Gastrocnemius medialis (tissue), 4 donors: ENCODE measurements at regions of chr1 and their contacts with region 1.

Region 1: DNA sequence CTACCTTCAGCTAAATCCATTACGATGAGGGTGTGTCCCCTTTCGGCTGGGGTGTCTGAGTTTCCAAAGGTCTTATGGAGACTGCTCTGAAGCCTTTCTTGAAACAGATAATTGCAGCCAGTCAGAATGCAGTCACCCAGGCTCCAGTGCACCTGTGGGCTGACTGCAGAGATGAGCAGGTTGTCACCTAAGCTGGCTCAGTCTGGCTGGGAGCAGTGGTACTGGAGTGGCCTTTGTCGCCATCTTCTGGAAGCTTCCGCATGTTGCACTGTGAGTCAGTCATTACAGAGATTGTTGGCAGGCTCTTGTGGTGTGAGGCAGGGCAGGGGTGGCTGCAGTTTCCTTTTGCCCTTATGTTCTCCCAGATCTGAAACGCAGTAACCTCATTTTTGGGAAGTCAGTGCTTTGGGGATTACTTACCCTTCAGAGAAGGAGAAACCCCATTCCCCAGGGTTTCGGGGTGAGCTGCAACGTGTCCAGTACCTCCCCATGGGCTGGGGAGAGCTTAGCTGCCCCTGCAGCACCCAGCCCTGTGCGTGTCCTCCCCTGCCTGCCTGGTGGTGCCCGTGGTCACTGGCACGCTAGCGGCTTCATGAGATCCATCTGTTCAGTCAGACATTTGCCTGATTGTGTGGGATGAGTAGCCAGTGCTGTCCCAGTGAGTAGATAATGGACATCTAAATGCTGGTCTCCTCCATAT is 48.0 kb downstream of the SMYD2 start:
- DNase-seq: peak; percentile 73 to 82
- ATAC-seq: peak; percentile 93 to 95
- H3K4me3 ChIP-seq: no peak overlapping the region
- H3K27ac ChIP-seq: no peak overlapping the region
- H3K4me1 ChIP-seq: peaks cover 6 to 15% of the 10 kb centered on the region in 2 donors
- H3K27me3 ChIP-seq: no peaks in the 10 kb centered on the region
- CTCF ChIP-seq: peak; percentile 92 to 98 (median 96)
- POLR2A ChIP-seq: no peak

Region 2: GRCh38 chr1:214213136-214213535 is 115.8 kb before region 1 on chr1:
- in situ Hi-C with region 1: loop called (anchors 5 kb)
- intact Hi-C with region 1: loop called (anchors 1 kb)
- DNase-seq: no peak
- ATAC-seq: no peak
- H3K4me3 ChIP-seq: no peak overlapping the region
- H3K27ac ChIP-seq: no peak overlapping the region
- H3K4me1 ChIP-seq: peaks cover 8 to 13% of the 10 kb centered on the region in 2 donors
- H3K27me3 ChIP-seq: no peaks in the 10 kb centered on the region
- CTCF ChIP-seq: no peak
- POLR2A ChIP-seq: no peak